Aorta (tissue), 5 donors: ENCODE measurements at regions of chr12 and their contacts with region 1.

Region 1: GRCh38 chr12:65891987-65892481 is 67.8 kb downstream of the HMGA2 start:
- DNase-seq: peak; percentile 87 to 89
- ATAC-seq: peak; percentile 93
- H3K4me3 ChIP-seq: no peak overlapping the region
- H3K27ac ChIP-seq: no peak overlapping the region
- H3K4me1 ChIP-seq: no peaks in the 10 kb centered on the region
- H3K27me3 ChIP-seq: peaks cover 0 to 1% of the 10 kb centered on the region in 2 donors

Region 2: GRCh38 chr12:65536876-65537661 is 355.0 kb before region 1 on chr12:
- intact Hi-C with region 1: loop called in 1 of 2 experiments (anchors 10 kb)
- DNase-seq: peak; percentile 66 to 83
- ATAC-seq: peak; percentile 90
- H3K4me3 ChIP-seq: no peak overlapping the region
- H3K27ac ChIP-seq: peak overlapping the region; percentile 36 to 81
- H3K4me1 ChIP-seq: no peaks in the 10 kb centered on the region
- H3K27me3 ChIP-seq: no peaks in the 10 kb centered on the region

Region 3: DNA sequence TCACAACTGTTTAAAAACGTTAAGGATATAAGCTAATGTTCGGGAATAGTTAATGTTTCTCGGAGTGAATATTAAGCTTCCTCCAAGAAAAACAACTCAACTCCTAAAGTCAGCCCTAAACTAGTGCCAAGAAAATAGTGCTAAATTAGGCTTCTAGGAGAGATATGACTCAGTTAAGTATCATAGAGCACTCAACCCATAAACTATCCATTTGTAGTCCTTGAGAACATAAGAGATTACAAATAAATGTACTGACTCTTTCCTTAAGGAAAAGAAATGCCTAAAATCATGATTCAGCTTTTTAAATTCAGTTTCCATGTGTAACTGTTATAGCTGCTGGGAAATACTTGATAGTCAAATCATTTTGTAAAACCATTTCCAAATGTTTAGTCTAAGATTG is 49.4 kb after region 1 on chr12:
- intact Hi-C with region 1: loop called in 1 of 2 experiments (anchors 5 kb)
- DNase-seq: no peak
- ATAC-seq: no peak
- H3K4me3 ChIP-seq: peak overlapping the region in 1 of 2 donors; percentile 18
- H3K27ac ChIP-seq: no peak overlapping the region
- H3K4me1 ChIP-seq: no peaks in the 10 kb centered on the region
- H3K27me3 ChIP-seq: no peaks in the 10 kb centered on the region